Motor neuron (in vitro differentiated cells): ENCODE measurements at regions of chr12 and their contacts with region 1.

Region 1: DNA sequence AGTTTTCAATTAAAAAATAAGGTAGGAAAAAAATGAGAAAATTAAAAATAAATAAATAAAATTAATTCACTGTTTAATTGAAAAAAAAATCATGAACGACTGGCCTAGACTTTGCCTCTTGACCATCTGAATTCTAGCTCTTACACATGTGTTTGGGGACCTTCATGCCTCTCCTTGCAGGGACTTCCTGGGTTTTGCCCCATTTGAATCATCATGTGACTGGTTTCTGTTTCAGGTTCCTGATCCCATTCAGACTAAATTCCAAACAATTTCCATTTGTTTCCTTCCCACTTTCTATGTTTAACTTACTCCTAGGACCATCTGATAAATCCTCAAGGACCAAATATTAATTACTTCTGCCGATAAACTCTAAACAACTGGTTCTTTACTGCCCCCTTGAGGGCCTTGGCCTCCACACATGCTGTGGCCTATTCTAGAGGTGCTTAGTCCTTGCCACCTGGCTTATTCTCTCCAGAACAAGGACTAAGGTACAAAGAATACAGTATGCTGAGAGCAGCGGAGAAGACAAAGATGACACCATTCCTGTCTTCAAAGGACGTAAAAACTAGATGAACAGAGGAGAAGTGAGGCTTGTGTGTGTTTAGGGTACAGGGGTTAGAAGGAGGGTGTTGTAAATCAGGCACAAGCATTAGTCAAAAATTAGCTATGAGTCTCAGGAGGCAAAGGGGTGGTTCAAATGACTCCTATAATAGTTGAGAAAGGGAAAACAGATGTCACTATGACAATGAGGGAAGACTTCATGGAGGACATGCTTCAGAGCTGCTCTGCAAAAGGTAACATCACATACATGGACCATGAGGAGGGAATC is 125.8 kb upstream of the AVPR1A start:
- ATAC-seq: peak in 3 of 8 experiments; percentile 87 to 90 (median 87)
- H3K4me3 ChIP-seq: no peak overlapping the region
- H3K27ac ChIP-seq: no peak overlapping the region
- H3K4me1 ChIP-seq: no peaks in the 10 kb centered on the region

Region 2: GRCh38 chr12:63151623-63152320 is 125.0 kb before region 1 on chr12:
- in situ Hi-C with region 1: loop called in 1 of 9 experiments (anchors 10 kb)
- ATAC-seq: peak; percentile 56 to 85 (median 80)
- H3K4me3 ChIP-seq: peak overlapping the region; percentile 32 to 41 (median 36)
- H3K27ac ChIP-seq: no peak overlapping the region
- H3K4me1 ChIP-seq: no peaks in the 10 kb centered on the region